B cell (primary cell): ENCODE measurements at regions of chr4 and their contacts with region 1.

Region 1: DNA sequence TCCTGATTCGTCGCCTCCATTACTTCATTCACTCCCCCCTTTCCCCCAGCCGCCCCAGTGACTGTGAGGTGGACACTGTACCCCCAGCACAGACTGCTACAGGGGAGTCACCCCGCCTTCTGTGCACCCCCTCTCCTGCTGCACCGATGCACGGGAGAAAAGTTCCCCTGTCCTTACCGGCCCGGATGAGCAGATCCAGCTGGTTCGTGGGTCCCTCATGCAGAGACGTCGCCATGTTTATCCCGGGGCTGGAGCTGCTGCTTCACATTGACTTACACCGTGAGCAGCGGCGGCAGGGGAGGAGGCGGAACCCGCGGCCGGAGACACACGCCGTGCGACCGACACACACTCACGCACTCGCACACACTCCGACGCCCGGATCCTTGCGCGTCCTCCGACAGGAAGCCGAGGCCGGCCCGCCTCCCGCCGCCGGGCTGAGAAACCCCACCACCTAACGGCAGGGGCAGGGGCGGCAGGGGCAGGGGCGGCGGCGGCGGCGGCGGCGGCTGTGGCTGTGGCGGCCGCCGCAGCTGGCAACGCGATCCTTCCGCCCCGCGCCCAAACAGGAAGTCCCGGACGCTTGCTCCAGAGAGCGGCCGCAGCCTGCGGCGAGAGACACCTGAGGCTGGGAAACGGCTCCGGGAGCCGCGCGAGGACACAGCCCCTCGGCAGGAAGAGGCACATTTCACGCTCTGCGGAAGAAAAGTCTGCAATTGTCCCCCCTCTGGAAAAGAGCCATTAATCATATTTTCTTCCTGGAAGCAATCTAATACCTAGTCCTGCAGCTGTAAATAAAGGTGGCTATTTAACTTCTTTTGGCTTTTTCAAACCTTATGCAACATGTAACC is 68.6 kb downstream of the NOCT start:
- DNase-seq: peak; percentile 92
- ATAC-seq: peak; percentile 62
- H3K4me3 ChIP-seq: peak overlapping the region; percentile 79 to 98 (median 97)
- H3K4me3 Mint-ChIP-seq: peak overlapping the region; percentile 87
- H3K27ac ChIP-seq: peak overlapping the region; percentile 89 to 93
- H3K27ac Mint-ChIP-seq: peak overlapping the region; percentile 94
- H3K4me1 ChIP-seq: peaks cover 14 to 23% of the 10 kb centered on the region in 2 donors
- H3K4me1 Mint-ChIP-seq: peaks cover 36% of the 10 kb centered on the region
- H3K27me3 ChIP-seq: no peaks in the 10 kb centered on the region
- H3K27me3 Mint-ChIP-seq: no peaks in the 10 kb centered on the region
- CTCF ChIP-seq: peak; percentile 42

Region 2: DNA sequence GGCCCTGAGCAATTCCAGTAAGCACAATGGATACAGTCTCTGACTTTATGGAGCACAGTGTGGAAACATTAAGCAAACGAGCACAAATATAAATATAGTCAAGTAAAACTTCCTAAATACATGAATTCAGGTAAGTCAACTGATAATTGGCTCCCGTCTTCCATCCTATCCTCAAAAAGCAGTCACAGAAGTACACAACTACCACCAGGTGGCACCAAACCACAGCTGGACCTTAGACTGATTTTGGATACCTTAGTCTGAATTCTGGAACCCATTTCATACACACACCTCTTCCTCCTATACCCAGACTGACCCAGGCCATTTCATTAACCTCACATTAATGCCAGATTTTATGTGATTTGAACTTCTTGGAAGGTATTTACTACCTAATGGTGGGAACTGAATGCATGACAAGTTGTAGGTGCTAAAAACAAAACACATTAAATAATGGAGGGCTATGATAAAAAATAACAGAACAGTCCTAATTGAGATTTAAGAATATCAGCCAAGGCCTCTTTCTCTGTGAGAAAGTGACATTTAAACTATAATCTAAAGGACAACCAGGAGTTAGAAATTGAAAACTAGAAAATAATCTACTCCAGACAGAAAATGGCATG is 15.3 kb after region 1 on chr4:
- CTCF ChIA-PET with region 1: interaction called, 9 read pairs
- POLR2A ChIA-PET with region 1: interaction called, 7 read pairs
- intact Hi-C with region 1: loop called (anchors 2 kb)
- DNase-seq: peak; percentile 87
- ATAC-seq: peak; percentile 75
- H3K4me3 ChIP-seq: no peak overlapping the region
- H3K4me3 Mint-ChIP-seq: no peak overlapping the region
- H3K27ac ChIP-seq: no peak overlapping the region
- H3K27ac Mint-ChIP-seq: no peak overlapping the region
- H3K4me1 ChIP-seq: no peaks in the 10 kb centered on the region
- H3K4me1 Mint-ChIP-seq: peaks cover 2% of the 10 kb centered on the region
- H3K27me3 ChIP-seq: no peaks in the 10 kb centered on the region
- H3K27me3 Mint-ChIP-seq: no peaks in the 10 kb centered on the region
- CTCF ChIP-seq: peak; percentile 89

Region 3: DNA sequence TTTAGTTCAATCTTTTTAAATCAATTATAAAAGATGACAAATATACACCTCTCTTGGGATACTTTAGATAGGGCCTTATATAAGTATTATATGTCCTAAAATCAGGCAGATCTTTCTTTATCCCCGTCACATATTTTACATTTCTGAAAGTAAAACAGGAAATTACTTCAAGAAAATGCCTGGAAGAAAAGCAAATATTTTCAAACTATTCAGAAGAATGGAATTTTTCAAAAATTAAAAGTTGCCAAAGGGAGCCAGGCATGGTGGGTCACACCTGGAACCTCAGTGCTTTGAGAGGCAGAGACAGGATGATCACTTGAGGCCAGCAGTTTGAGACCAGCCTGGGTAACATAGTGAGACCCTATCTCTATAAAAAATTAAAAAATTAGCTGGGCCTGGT is 161.4 kb after region 1 on chr4:
- CTCF ChIA-PET with region 1: no interaction called
- POLR2A ChIA-PET with region 1: no interaction called
- intact Hi-C with region 1: no loop called
- DNase-seq: no peak
- ATAC-seq: no peak
- H3K4me3 ChIP-seq: no peak overlapping the region
- H3K4me3 Mint-ChIP-seq: no peak overlapping the region
- H3K27ac ChIP-seq: no peak overlapping the region
- H3K27ac Mint-ChIP-seq: no peak overlapping the region
- H3K4me1 ChIP-seq: no peaks in the 10 kb centered on the region
- H3K4me1 Mint-ChIP-seq: no peaks in the 10 kb centered on the region
- H3K27me3 ChIP-seq: no peaks in the 10 kb centered on the region
- H3K27me3 Mint-ChIP-seq: no peaks in the 10 kb centered on the region
- CTCF ChIP-seq: no peak

Region 4: GRCh38 chr4:139301113-139301820 is 217.1 kb after region 1 on chr4 and contains the start of gene NAA15:
- CTCF ChIA-PET with region 1: interaction called, 31 read pairs
- POLR2A ChIA-PET with region 1: interaction called, 27 read pairs
- intact Hi-C with region 1: loop called (anchors 1 kb)
- DNase-seq: peak; percentile 98
- ATAC-seq: peak; percentile 89
- H3K4me3 ChIP-seq: peak within 1 kb of the TSS; percentile 75 to 98 (median 94)
- H3K4me3 Mint-ChIP-seq: peak within 1 kb of the TSS; percentile 99
- H3K27ac ChIP-seq: peak within 1 kb of the TSS; percentile 91 to 96
- H3K27ac Mint-ChIP-seq: peak within 1 kb of the TSS; percentile 99
- H3K4me1 ChIP-seq: peaks cover 22 to 23% of the 10 kb centered on the region in 2 donors
- H3K4me1 Mint-ChIP-seq: peaks cover 45% of the 10 kb centered on the region
- H3K27me3 ChIP-seq: no peaks in the 10 kb centered on the region
- H3K27me3 Mint-ChIP-seq: no peaks in the 10 kb centered on the region
- CTCF ChIP-seq: no peak
- total RNA-seq, gene NAA15: 56.7 and 59.5 TPM in 2 replicates

Region 5: GRCh38 chr4:139453371-139454110 is 369.4 kb after region 1 on chr4:
- CTCF ChIA-PET with region 1: interaction called, 3 read pairs
- POLR2A ChIA-PET with region 1: interaction called, 9 read pairs
- intact Hi-C with region 1: loop called (anchors 1 kb)
- DNase-seq: peak; percentile 98
- ATAC-seq: peak; percentile 87
- H3K4me3 ChIP-seq: peak overlapping the region; percentile 64 to 99 (median 93)
- H3K4me3 Mint-ChIP-seq: peak overlapping the region; percentile 96
- H3K27ac ChIP-seq: peak overlapping the region; percentile 97 to 98
- H3K27ac Mint-ChIP-seq: peak overlapping the region; percentile 99
- H3K4me1 ChIP-seq: peaks cover 28 to 34% of the 10 kb centered on the region in 2 donors
- H3K4me1 Mint-ChIP-seq: peaks cover 51% of the 10 kb centered on the region
- H3K27me3 ChIP-seq: no peaks in the 10 kb centered on the region
- H3K27me3 Mint-ChIP-seq: no peaks in the 10 kb centered on the region
- CTCF ChIP-seq: peak; percentile 42

Region 6: GRCh38 chr4:139560406-139561104 is 476.4 kb after region 1 on chr4:
- CTCF ChIA-PET with region 1: no interaction called
- POLR2A ChIA-PET with region 1: interaction called, 14 read pairs
- intact Hi-C with region 1: loop called (anchors 2 kb)
- DNase-seq: peak; percentile 87
- ATAC-seq: peak; percentile 54
- H3K4me3 ChIP-seq: peak overlapping the region in 3 of 5 experiments; percentile 2 to 45 (median 36)
- H3K4me3 Mint-ChIP-seq: peak overlapping the region; percentile 84
- H3K27ac ChIP-seq: peak overlapping the region; percentile 79 to 94
- H3K27ac Mint-ChIP-seq: peak overlapping the region; percentile 99
- H3K4me1 ChIP-seq: peaks cover 25 to 29% of the 10 kb centered on the region in 2 donors
- H3K4me1 Mint-ChIP-seq: peaks cover 31% of the 10 kb centered on the region
- H3K27me3 ChIP-seq: no peaks in the 10 kb centered on the region
- H3K27me3 Mint-ChIP-seq: no peaks in the 10 kb centered on the region
- CTCF ChIP-seq: no peak